MCF 10A (cell line): ENCODE measurements at regions of chr5 and their contacts with region 1.

Region 1: DNA sequence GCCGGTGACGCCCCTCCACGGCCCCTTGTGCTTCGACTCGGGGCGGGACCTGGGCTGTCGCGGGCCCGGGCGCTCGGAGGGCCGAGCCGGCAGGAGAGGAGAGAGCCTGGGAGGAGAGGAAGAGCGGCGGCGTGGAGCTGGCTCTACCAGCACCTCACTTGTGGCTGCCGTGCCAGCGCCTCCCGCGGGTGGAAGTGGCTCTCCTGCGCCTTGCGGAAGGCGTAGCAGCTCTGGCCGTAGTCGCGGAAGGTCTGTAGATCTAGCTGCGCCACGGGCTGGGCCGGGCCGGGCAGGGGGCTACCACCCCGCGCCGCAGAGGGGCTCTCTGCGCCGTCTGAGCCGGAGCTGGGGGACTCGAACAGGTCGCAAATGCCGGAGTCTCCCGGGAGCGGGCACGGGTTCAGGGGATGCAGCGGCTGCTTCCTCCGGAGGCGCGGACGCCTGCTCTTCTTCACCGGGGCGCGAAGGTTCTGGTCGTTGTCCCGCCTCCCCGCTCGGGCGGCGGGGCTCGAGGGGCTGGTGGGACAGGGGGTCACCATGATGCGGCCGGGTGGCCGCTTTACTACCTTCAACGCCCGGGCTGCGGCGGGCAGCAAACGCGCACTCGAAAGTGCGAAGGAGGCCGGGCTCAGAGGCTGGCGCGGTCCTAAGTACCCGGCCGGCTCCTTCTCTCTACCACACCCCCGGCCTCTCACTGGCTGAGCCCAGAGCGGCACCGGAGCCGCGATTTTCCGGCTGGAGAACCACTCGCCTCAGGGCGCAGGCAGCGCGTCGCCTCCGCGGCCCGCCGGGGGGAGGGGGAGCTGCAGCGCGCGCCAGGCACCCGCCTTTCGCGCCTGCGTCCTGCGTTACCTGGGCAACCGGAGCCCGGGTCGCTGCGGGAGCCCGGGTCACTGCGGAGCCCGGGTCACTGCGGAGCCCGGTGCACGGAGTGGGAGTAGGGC is at the start of gene CCNO:
- DNase-seq: peak; percentile 89
- H3K4me3 Mint-ChIP-seq: peak within 1 kb of the TSS; percentile 98
- H3K27ac Mint-ChIP-seq: peak within 1 kb of the TSS; percentile 90
- H3K4me1 Mint-ChIP-seq: no peaks in the 10 kb centered on the region
- H3K27me3 Mint-ChIP-seq: no peaks in the 10 kb centered on the region
- CTCF ChIP-seq: peak; percentile 20
- total RNA-seq, gene CCNO: 10.6 and 11.7 TPM in 2 replicates

Region 2: GRCh38 chr5:55187370-55187769 is 45.9 kb before region 1 on chr5:
- CTCF ChIA-PET with region 1: interaction called, 12 read pairs
- POLR2A ChIA-PET with region 1: interaction called, 9 read pairs
- intact Hi-C with region 1: no loop called
- DNase-seq: peak; percentile 61
- H3K4me3 Mint-ChIP-seq: no peak overlapping the region
- H3K27ac Mint-ChIP-seq: no peak overlapping the region
- H3K4me1 Mint-ChIP-seq: peaks cover 7% of the 10 kb centered on the region
- H3K27me3 Mint-ChIP-seq: peaks cover 24% of the 10 kb centered on the region
- CTCF ChIP-seq: peak; percentile 56

Region 3: GRCh38 chr5:55258339-55258738 is 25.1 kb after region 1 on chr5:
- CTCF ChIA-PET with region 1: interaction called, 4 read pairs
- POLR2A ChIA-PET with region 1: interaction called, 14 read pairs
- intact Hi-C with region 1: no loop called
- DNase-seq: no peak
- H3K4me3 Mint-ChIP-seq: no peak overlapping the region
- H3K27ac Mint-ChIP-seq: no peak overlapping the region
- H3K4me1 Mint-ChIP-seq: no peaks in the 10 kb centered on the region
- H3K27me3 Mint-ChIP-seq: no peaks in the 10 kb centered on the region
- CTCF ChIP-seq: no peak

Region 4: DNA sequence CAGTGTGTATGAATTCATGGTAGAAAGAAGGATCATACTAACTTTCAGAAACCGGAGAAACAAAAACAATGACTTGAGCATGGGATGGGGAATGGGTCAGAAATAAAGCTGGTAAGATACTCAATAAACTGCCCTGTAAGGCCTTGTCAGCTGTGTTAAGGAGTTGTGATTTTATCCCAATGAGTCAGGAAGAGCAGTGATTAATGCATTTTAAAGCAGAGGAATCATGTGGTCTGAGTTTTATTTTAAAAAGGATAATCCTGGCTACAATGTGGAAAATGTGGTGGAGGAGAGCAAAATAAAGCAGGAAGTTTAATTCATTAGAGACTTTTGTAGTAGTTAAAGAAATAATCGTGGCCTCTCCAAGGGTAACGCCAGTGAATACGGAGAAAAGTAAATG is 45.5 kb after region 1 on chr5:
- CTCF ChIA-PET with region 1: no interaction called
- POLR2A ChIA-PET with region 1: interaction called, 10 read pairs
- intact Hi-C with region 1: no loop called
- DNase-seq: no peak
- H3K4me3 Mint-ChIP-seq: no peak overlapping the region
- H3K27ac Mint-ChIP-seq: no peak overlapping the region
- H3K4me1 Mint-ChIP-seq: no peaks in the 10 kb centered on the region
- H3K27me3 Mint-ChIP-seq: no peaks in the 10 kb centered on the region
- CTCF ChIP-seq: no peak

Region 5: DNA sequence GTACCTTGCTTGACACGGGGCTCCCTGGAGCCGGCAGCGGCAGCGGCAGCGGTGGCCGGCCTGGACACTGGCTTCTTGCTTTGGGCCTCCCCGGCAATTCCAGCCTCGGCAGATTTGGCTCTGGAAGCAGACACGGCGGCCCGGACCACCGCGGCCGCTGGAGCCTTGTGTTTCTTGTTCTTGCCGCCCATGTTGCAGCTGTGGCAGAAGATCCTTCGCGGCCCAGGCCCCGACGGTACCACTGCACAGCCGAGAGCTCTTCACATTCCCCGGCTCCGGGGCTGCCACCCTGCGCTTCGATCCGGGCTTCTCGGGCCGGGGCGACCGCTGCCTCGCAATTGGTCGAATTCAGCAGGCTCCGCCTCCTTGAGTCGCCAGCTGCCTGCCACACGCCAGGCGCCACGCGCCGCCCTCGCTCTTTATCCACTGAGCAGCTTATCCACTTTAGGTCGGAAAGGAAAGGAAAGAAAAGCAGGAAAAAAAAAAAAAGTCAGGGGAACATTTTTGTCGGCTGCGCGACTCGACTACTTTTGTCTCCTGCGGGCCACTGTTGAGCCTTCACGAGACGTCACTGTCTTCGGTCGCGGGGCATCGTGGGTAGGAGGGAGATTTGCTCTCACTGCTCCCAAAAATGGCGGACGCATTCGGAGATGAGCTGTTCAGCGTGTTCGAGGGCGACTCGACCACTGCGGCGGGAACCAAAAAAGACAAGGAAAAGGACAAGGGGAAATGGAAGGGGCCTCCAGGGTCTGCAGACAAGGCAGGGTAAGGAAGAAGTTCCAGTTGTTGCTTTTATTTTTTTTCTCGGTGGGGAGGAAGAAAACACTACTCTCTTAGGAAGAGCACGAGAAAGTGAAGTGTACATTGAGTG is 74.4 kb after region 1 on chr5 and contains the starts of genes DHX29 and MTREX:
- CTCF ChIA-PET with region 1: interaction called, 20 read pairs
- POLR2A ChIA-PET with region 1: interaction called, 113 read pairs
- intact Hi-C with region 1: loop called (anchors 2 kb)
- DNase-seq: peak; percentile 93
- H3K4me3 Mint-ChIP-seq: no peak within 1 kb of the TSS
- H3K27ac Mint-ChIP-seq: no peak within 1 kb of the TSS
- H3K4me1 Mint-ChIP-seq: peaks cover 23% of the 10 kb centered on the region
- H3K27me3 Mint-ChIP-seq: no peaks in the 10 kb centered on the region
- CTCF ChIP-seq: no peak
- total RNA-seq, gene DHX29: 18.1 and 21.8 TPM in 2 replicates
- total RNA-seq, gene MTREX: 113 and 118 TPM in 2 replicates